Activated T-helper 1 cell treated with anti-CD3 and anti-CD28 coated beads, Interleukin-12 subunit alpha, Interleukin-12 subunit beta, Interleukin-2, Interleukin-4 antibody, amounts not matched to agents 30 ng/mL and 10 ng/mL and 1 ng/mL, durations not matched to agents 14 hours and 24 hours and 36 hours (primary cell): ENCODE measurements at regions of chr5 and their contacts with region 1.

Region 1: GRCh38 chr5:173057062-173057924 is 1.1 kb downstream of the CREBRF start:
- DNase-seq: peak; percentile 98
- H3K4me3 Mint-ChIP-seq: peak overlapping the region; percentile 88
- H3K27ac Mint-ChIP-seq: peak overlapping the region; percentile 90
- H3K4me1 Mint-ChIP-seq: peaks cover 17% of the 10 kb centered on the region
- H3K27me3 Mint-ChIP-seq: peaks cover 2% of the 10 kb centered on the region

Region 2: GRCh38 chr5:172006321-172007174 is 1050.7 kb before region 1 on chr5 and contains the start of gene FBXW11:
- intact Hi-C with region 1: loop called (anchors 2 kb)
- DNase-seq: peak; percentile 93
- H3K4me3 Mint-ChIP-seq: peak within 1 kb of the TSS; percentile 95
- H3K27ac Mint-ChIP-seq: peak within 1 kb of the TSS; percentile 95
- H3K4me1 Mint-ChIP-seq: peaks cover 57% of the 10 kb centered on the region
- H3K27me3 Mint-ChIP-seq: no peaks in the 10 kb centered on the region
- total RNA-seq, gene FBXW11: 55.6 and 57.9 TPM in 2 replicates

Region 3: GRCh38 chr5:172770675-172771438 is 286.4 kb before region 1 on chr5 and contains the start of gene DUSP1:
- intact Hi-C with region 1: loop called (anchors 1 kb)
- DNase-seq: peak; percentile 93
- H3K4me3 Mint-ChIP-seq: peak within 1 kb of the TSS; percentile 88
- H3K27ac Mint-ChIP-seq: peak within 1 kb of the TSS; percentile 98
- H3K4me1 Mint-ChIP-seq: peaks cover 61% of the 10 kb centered on the region
- H3K27me3 Mint-ChIP-seq: no peaks in the 10 kb centered on the region
- total RNA-seq, gene DUSP1: 11.9 and 12.5 TPM in 2 replicates

Region 4: GRCh38 chr5:172958331-172959046 is 98.8 kb before region 1 on chr5:
- intact Hi-C with region 1: loop called (anchors 1 kb)
- DNase-seq: peak; percentile 51
- H3K4me3 Mint-ChIP-seq: peak overlapping the region; percentile 99
- H3K27ac Mint-ChIP-seq: peak overlapping the region; percentile 98
- H3K4me1 Mint-ChIP-seq: peaks cover 27% of the 10 kb centered on the region
- H3K27me3 Mint-ChIP-seq: peaks cover 6% of the 10 kb centered on the region

Region 5: GRCh38 chr5:173144200-173145176 is 87.2 kb after region 1 on chr5 and contains the start of gene BNIP1:
- intact Hi-C with region 1: loop called (anchors 1 kb)
- DNase-seq: peak; percentile 91
- H3K4me3 Mint-ChIP-seq: peak within 1 kb of the TSS; percentile 96
- H3K27ac Mint-ChIP-seq: peak within 1 kb of the TSS; percentile 97
- H3K4me1 Mint-ChIP-seq: peaks cover 9% of the 10 kb centered on the region
- H3K27me3 Mint-ChIP-seq: no peaks in the 10 kb centered on the region
- total RNA-seq, gene BNIP1: 22.6 and 25.3 TPM in 2 replicates

Region 6: DNA sequence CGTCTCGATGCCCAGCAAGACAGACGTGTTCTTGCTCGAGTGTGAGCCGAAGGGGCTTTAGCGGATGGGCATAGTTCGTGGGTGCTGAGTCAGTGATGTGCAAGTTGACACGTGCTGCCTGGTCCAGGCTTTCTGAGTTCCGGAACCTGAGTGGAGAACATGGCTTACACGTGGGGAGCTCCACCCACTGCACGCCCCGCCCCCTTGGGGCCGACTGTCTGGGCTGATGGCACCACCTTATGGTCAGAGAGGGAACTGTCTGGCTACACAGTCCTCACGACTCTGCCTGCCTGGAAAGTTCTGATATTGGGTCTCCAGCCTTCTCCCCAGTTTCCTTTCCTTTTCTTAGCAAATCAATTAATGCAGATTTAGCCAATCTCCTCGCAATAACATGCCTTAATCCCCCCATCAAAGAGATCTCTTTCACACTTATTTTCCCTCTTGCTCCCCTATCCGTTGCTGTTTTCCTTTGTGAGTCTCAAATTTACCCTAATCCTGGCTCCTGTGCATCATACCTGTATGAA is 274.7 kb after region 1 on chr5:
- intact Hi-C with region 1: loop called (anchors 1 kb)
- DNase-seq: peak; percentile 86
- H3K4me3 Mint-ChIP-seq: peak overlapping the region; percentile 56
- H3K27ac Mint-ChIP-seq: peak overlapping the region; percentile 79
- H3K4me1 Mint-ChIP-seq: peaks cover 35% of the 10 kb centered on the region
- H3K27me3 Mint-ChIP-seq: peaks cover 11% of the 10 kb centered on the region